Mammary epithelial cell (primary cell): ENCODE measurements at regions of chr12 and their contacts with region 1.

Region 1: GRCh38 chr12:7801460-7801859 is 12.3 kb downstream of the NANOG start:
- DNase-seq: no peak
- H3K4me3 ChIP-seq: no peak overlapping the region
- H3K27ac ChIP-seq: no peak overlapping the region
- H3K4me1 ChIP-seq: peaks cover 10% of the 10 kb centered on the region
- H3K27me3 ChIP-seq: no peaks in the 10 kb centered on the region
- CTCF ChIP-seq: no peak

Region 2: DNA sequence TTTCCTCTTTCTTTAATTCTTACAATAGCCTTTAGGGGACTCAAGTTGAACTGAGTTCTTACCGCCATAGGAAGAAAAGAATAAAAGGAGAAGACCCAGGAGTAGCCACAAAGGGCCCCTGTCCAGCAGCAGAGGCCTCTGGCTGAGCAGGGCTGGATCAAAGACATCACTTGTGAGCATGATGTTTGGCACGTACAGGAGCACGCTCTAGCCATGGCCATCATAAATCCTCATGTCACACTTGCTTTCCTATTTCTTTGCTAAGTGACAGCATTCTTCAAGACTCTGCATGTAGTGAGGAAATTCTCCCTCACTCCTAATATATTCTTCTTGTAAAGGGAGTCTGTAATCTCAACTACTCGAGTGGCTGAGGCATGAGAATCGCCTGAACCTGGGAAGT is 70.0 kb before region 1 on chr12:
- CTCF ChIA-PET with region 1: no interaction called
- dilution Hi-C with region 1: loop called (anchors 5 kb)
- in situ Hi-C with region 1: no loop called
- intact Hi-C with region 1: no loop called
- DNase-seq: no peak
- H3K4me3 ChIP-seq: no peak overlapping the region
- H3K27ac ChIP-seq: no peak overlapping the region
- H3K4me1 ChIP-seq: no peaks in the 10 kb centered on the region
- H3K27me3 ChIP-seq: no peaks in the 10 kb centered on the region
- CTCF ChIP-seq: no peak

Region 3: GRCh38 chr12:8127138-8127537 is 325.7 kb after region 1 on chr12:
- CTCF ChIA-PET with region 1: no interaction called
- dilution Hi-C with region 1: no loop called
- in situ Hi-C with region 1: no loop called
- intact Hi-C with region 1: no loop called
- DNase-seq: no peak
- H3K4me3 ChIP-seq: no peak overlapping the region
- H3K27ac ChIP-seq: no peak overlapping the region
- H3K4me1 ChIP-seq: no peaks in the 10 kb centered on the region
- H3K27me3 ChIP-seq: no peaks in the 10 kb centered on the region
- CTCF ChIP-seq: no peak